Aorta (tissue), 5 donors: ENCODE measurements at regions of chr9 and their contacts with region 1.

Region 1: GRCh38 chr9:127311239-127311741 is 46.7 kb downstream of the GARNL3 start:
- DNase-seq: peak in 1 of 2 donors; percentile 55
- ATAC-seq: peak; percentile 51
- H3K4me3 ChIP-seq: no peak overlapping the region
- H3K27ac ChIP-seq: peak overlapping the region in 1 of 2 donors; percentile 90
- H3K4me1 ChIP-seq: peaks cover 0 to 3% of the 10 kb centered on the region in 2 donors
- H3K27me3 ChIP-seq: no peaks in the 10 kb centered on the region

Region 2: DNA sequence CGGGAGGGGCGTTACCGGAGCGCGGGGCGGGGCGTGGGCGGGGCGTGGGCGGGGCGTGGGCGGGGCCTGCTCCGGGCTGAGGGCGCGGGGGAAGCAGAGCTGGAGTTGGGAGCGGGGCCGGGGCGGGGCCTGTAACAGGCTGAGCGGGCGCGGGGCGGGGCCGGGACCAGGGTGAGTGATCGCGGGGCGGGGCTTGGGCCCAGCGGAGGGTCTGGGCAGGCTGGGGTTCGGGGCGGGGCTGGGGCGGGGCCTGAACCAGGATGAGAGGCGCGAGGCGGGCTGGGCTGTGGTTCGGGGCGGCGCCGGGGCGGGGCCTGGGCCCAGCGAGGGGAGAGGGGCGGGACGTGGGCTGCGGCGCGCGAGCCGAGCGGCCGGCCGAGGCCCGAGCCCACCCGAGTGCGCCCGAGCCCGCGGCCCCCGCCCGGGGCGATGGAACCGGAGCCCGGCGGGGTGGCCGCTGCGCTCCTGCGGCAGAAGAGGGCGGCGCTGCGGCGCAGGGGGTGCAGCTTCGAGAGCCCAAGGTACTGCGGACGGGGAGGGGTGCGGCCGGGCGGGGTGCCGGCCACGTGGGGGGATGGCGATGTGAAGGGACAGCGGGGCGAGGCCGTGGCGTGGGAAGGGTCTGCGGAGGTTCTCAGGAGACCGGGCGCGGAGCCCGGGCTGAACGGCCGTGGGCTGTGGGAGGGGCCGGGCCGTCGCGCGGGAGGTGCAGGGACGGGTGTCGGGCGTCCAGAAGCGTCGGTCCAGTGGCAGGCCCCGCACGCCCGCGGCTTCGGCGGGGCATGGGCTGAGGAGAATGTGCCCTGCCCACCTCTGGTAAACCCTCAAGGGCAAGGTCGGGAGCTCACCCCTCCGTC is 86.2 kb before region 1 on chr9:
- intact Hi-C with region 1: loop called in 1 of 2 experiments (anchors 5 kb)
- DNase-seq: peak; percentile 98 to 99
- ATAC-seq: peak; percentile 95
- H3K4me3 ChIP-seq: peak overlapping the region; percentile 65 to 83
- H3K27ac ChIP-seq: peak overlapping the region; percentile 17 to 45
- H3K4me1 ChIP-seq: no peaks in the 10 kb centered on the region
- H3K27me3 ChIP-seq: no peaks in the 10 kb centered on the region

Region 3: GRCh38 chr9:127258606-127259471 is 52.5 kb before region 1 on chr9:
- intact Hi-C with region 1: loop called in 1 of 2 experiments (anchors 5 kb)
- DNase-seq: no peak
- ATAC-seq: peak; percentile 69
- H3K4me3 ChIP-seq: no peak overlapping the region
- H3K27ac ChIP-seq: peak overlapping the region; percentile 78 to 88
- H3K4me1 ChIP-seq: peaks cover 2 to 18% of the 10 kb centered on the region in 2 donors
- H3K27me3 ChIP-seq: no peaks in the 10 kb centered on the region

Region 4: GRCh38 chr9:127336738-127337251 is 25.5 kb after region 1 on chr9:
- intact Hi-C with region 1: loop called in 1 of 2 experiments (anchors 2 kb)
- DNase-seq: peak; percentile 84 to 85
- ATAC-seq: peak; percentile 87
- H3K4me3 ChIP-seq: no peak overlapping the region
- H3K27ac ChIP-seq: peak overlapping the region; percentile 63 to 92
- H3K4me1 ChIP-seq: peaks cover 2 to 11% of the 10 kb centered on the region in 2 donors
- H3K27me3 ChIP-seq: no peaks in the 10 kb centered on the region

Region 5: DNA sequence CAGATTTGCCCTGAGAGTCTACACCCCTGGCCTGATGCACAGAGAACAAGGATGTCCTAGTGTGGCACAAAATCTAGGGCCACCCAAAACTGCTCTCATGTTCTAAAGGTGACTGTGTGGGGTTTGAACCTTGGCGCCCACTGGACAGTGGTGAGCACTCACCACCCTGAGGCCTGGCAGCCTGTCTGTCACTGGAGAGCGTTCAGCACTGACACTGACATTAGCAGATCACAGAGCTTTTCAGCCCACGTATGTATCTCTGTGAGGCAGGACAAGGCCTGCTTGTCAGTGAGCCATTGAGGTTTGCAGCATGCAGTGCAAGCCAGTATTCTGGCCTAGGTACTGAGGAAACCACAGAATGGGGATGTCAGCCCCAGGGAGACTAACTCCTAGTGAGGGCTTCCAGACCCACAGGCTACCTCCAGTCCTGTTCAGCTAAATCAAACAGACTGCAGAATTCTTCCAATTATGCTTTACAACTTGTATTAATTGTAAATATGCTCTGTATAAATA is 46.8 kb after region 1 on chr9:
- intact Hi-C with region 1: loop called in 1 of 2 experiments (anchors 5 kb)
- DNase-seq: no peak
- ATAC-seq: no peak
- H3K4me3 ChIP-seq: no peak overlapping the region
- H3K27ac ChIP-seq: no peak overlapping the region
- H3K4me1 ChIP-seq: no peaks in the 10 kb centered on the region
- H3K27me3 ChIP-seq: no peaks in the 10 kb centered on the region

Region 6: GRCh38 chr9:127396808-127397497 is 85.7 kb after region 1 on chr9 and contains the start of gene SLC2A8:
- intact Hi-C with region 1: loop called in 1 of 2 experiments (anchors 5 kb)
- DNase-seq: peak; percentile 99
- ATAC-seq: peak; percentile 98
- H3K4me3 ChIP-seq: peak within 1 kb of the TSS; percentile 58 to 66
- H3K27ac ChIP-seq: peak within 1 kb of the TSS; percentile 5 to 58
- H3K4me1 ChIP-seq: no peaks in the 10 kb centered on the region
- H3K27me3 ChIP-seq: no peaks in the 10 kb centered on the region
- total RNA-seq, gene SLC2A8: 15.3 to 21.0 TPM